ENCODE measurements at regions of chr16 and their contacts with region 1.

Region 1: DNA sequence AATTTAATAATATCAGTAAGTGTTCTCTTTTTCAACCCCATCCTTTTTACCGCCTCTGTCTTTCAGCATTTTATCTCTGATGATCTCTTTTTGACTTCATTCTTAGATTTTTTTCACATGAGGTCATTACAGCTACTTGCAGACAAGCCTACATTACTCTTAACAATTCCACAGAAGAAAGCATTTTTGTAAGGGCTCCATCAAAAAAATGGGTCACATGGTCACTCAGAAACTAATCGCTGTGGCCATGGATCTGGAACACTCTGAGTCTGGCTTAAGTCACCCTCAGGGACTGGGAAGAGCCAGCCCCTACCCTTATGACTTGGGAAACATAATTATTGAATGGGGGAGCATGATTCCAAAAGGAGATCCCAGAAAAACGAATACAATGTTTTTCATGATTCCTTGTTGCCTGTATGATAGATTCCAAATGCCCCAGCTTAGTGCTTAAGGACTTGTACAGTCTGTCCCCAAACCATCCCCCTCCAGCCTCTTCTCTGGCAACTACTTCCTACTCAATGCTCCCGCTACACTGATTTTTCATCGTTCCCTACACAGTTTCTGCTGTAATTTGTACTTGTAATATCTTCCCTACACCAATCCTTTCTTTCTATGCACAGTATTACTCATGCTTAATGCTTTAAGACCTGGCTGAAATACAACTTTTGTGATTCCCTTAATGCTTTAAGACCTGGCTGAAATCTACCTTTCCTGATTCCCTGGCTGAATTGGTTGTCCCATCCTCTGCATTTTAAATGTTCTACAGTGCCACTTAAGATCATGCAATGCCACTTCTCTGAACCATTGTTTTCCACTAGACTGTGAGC is 457.8 kb downstream of the HS3ST4 start:
- DNase-seq: no peak
- H3K4me3 ChIP-seq: no peak overlapping the region
- CTCF ChIP-seq: no peak

Region 2: DNA sequence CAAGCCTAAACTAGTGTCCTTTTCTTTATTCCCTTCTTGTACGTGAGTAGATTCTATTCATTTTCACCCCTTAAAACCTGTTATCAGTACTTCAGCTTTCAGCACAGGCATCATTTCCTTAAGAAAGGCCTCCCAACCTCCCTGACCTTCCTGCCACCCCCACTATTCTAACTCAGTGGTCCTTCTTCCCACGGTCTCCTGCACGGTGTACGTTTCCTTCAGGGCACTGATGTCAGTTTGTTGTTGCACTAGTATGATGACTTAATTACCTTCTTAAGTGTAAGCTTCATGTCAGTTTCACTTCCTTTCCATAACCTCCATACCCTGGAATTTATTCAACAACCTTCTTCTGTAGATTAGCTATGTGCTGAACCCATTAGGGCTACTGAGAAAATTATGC is 26.4 kb after region 1 on chr16:
- in situ Hi-C with region 1: loop called (anchors 5 kb)
- DNase-seq: no peak
- H3K4me3 ChIP-seq: no peak overlapping the region
- CTCF ChIP-seq: no peak

Region 3: DNA sequence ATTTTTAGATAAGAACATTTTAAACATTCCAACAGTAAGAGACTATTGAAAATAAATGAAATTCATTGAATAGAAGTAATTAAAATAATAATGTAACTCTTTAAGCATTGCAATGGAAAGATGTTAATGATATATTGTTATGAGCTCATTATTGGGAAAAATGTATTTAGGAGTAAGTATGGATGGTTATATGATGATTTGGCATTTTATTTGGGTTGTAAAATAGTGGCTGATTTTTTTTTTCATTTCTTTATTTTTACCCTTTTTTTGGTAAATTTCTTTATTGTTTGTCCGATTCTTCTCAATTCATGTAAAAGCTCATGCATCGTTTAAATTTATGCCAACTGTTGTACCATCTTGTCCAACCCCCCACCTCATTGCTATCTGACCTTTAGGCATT is 82.1 kb after region 1 on chr16:
- in situ Hi-C with region 1: no loop called
- DNase-seq: no peak
- H3K4me3 ChIP-seq: no peak overlapping the region
- CTCF ChIP-seq: no peak

Region 4: GRCh38 chr16:26252598-26252997 is 103.0 kb after region 1 on chr16:
- in situ Hi-C with region 1: no loop called
- DNase-seq: no peak
- H3K4me3 ChIP-seq: no peak overlapping the region
- CTCF ChIP-seq: no peak